ENCODE measurements at regions of chr6 and their contacts with region 1.

Region 1: DNA sequence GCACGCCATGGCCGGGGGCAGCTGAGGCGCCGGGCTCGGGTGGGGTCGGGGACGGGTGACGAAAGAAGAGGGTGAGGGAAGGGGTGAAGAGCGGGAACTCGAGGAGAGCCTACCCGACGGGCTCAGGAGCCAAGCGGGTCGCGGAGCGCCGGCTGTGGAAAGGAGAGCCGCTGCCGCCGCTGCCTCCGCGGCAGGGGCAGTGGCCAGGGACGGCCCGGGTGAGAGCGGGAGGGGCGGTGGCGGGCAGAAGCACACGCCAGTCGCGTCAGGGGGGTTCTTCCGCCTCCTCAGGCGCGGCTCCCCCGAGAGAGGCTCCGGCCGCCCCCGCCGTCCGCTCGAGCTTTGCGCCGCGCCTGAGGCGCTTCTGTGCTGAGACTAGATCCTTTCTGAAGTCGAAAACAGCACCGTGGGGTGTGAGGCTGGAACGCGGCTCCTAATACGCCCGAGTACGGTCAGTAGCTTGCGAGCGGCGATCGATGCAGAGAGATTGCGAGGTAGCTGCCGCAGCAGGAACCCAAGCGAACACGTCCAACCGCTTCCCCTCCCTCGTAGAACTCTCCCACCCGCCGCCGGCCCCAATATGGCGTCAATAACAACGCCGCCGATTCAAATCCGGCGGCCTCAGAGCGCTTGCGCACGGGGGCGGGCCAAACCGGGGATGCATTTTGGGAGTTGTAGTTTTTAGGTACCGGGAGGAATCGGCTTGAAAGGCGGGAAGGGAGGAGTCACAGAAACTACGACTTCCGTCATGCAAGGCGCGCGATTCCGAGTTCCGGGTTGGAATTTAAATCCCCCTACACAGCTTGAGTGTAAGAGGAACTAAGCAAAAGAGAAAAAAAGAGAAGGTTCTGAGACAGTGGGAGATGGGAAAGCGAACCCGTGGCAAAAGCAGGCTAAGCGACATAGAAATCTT is at the start of gene AKIRIN2:
- DNase-seq: peak; percentile 97
- H3K4me3 Mint-ChIP-seq: peak within 1 kb of the TSS; percentile 99
- H3K27ac Mint-ChIP-seq: peak within 1 kb of the TSS; percentile 97
- H3K4me1 Mint-ChIP-seq: peaks cover 44% of the 10 kb centered on the region
- H3K27me3 Mint-ChIP-seq: no peaks in the 10 kb centered on the region
- total RNA-seq, gene AKIRIN2: 40.1 and 42.0 TPM in 2 replicates

Region 2: DNA sequence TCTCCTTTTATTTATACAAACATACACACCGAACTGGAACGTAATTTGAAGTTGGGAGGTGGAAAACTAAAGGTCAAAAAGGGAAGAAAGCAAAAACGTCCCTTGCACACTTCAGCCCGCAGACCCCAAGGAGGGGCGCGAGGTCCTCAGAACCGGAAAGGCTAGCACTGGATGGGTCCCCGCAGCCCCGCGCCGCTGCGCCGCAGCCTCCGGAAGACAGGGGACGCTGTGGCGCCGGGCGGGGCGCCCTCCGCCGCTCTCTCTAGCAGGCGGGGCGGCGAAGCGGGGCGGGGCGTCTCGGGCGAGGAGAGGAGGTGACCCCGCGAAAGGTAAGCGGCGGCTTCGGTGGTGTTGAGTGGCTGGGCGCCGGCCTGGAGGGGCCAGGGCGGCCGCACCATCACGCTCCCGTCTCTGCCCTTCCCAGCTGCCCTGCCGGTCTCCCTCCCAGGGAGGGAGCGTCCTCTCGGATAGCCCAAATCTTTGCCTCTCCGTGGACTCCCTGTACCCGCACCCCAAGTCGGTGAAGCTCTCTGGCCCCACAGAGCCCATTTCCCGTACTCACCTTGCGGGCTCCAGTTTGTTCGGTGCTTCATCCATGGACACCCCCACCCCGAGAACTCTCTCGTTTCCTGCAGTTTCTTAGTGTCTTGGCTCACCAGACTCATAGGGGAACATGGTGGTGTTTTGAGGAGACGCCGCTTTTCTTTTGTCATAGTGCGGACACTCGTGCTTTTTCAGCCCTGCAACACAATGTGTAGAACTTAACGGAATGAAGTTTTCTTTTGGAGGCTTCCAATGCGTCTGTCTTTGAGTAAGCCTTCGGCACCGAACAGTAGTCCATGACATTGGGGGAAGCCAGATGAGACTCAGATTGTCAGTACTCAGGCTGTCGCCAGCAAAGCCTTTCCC is 379.4 kb before region 1 on chr6 and contains the start of gene SMIM8:
- intact Hi-C with region 1: loop called (anchors 1 kb)
- DNase-seq: peak; percentile 84
- H3K4me3 Mint-ChIP-seq: peak within 1 kb of the TSS; percentile 99
- H3K27ac Mint-ChIP-seq: peak within 1 kb of the TSS; percentile 92
- H3K4me1 Mint-ChIP-seq: peaks cover 8% of the 10 kb centered on the region
- H3K27me3 Mint-ChIP-seq: peaks cover 3% of the 10 kb centered on the region
- total RNA-seq, gene SMIM8: 7.3 and 9.2 TPM in 2 replicates

Region 3: GRCh38 chr6:87472525-87473418 is 229.2 kb before region 1 on chr6 and contains the start of gene SLC35A1:
- intact Hi-C with region 1: loop called (anchors 1 kb)
- DNase-seq: peak; percentile 77
- H3K4me3 Mint-ChIP-seq: peak within 1 kb of the TSS; percentile 98
- H3K27ac Mint-ChIP-seq: peak within 1 kb of the TSS; percentile 97
- H3K4me1 Mint-ChIP-seq: peaks cover 14% of the 10 kb centered on the region
- H3K27me3 Mint-ChIP-seq: peaks cover 7% of the 10 kb centered on the region
- total RNA-seq, gene SLC35A1: 9.7 and 10.2 TPM in 2 replicates

Region 4: DNA sequence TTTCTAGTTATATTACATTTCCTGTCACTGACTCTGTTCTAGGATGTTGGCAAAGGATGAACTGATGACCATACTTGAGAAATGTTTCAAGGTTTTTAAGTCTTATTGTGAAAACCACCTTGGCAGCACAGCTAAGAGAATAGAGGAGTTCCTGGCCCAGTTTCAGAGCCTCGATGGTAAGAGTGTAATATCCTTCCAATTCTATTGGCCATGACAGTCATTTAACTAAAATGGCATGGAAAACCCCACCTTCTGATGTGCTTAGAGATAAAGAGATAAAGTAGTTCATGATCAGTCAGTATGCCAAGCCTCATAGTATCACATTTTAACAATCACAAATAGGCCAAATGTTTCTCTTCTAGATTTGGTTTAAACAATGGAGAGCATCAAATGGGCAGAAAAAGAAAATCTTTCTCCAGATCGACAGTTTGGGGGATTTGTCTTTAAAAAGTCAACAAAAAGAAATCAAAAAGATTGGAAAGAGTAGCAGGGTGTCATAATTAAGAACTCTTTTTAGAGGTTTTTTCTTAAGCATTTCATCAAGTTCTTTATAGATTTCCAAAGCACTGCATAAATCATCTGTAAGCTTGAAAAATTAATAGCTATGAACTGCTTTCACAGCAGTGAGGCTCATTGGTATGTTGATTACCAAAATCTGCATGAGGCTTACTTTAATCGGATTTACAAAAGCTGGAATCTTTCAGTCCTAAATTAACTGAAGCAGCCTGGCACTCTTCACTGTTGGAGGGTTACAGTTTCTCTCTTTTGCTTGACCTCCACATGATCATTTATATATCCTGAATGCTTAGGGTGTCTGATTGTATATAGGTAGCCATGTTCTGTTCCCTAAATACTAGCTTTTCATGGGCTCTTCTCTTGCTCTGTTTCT is 48.6 kb before region 1 on chr6:
- intact Hi-C with region 1: loop called (anchors 2 kb)
- DNase-seq: no peak
- H3K4me3 Mint-ChIP-seq: peak overlapping the region; percentile 53
- H3K27ac Mint-ChIP-seq: peak overlapping the region; percentile 87
- H3K4me1 Mint-ChIP-seq: peaks cover 38% of the 10 kb centered on the region
- H3K27me3 Mint-ChIP-seq: no peaks in the 10 kb centered on the region

Region 5: GRCh38 chr6:87742106-87742505 is 40.2 kb after region 1 on chr6:
- intact Hi-C with region 1: loop called (anchors 1 kb)
- DNase-seq: peak; percentile 43
- H3K4me3 Mint-ChIP-seq: no peak overlapping the region
- H3K27ac Mint-ChIP-seq: peak overlapping the region; percentile 27
- H3K4me1 Mint-ChIP-seq: peaks cover 43% of the 10 kb centered on the region
- H3K27me3 Mint-ChIP-seq: peaks cover 2% of the 10 kb centered on the region

Region 6: DNA sequence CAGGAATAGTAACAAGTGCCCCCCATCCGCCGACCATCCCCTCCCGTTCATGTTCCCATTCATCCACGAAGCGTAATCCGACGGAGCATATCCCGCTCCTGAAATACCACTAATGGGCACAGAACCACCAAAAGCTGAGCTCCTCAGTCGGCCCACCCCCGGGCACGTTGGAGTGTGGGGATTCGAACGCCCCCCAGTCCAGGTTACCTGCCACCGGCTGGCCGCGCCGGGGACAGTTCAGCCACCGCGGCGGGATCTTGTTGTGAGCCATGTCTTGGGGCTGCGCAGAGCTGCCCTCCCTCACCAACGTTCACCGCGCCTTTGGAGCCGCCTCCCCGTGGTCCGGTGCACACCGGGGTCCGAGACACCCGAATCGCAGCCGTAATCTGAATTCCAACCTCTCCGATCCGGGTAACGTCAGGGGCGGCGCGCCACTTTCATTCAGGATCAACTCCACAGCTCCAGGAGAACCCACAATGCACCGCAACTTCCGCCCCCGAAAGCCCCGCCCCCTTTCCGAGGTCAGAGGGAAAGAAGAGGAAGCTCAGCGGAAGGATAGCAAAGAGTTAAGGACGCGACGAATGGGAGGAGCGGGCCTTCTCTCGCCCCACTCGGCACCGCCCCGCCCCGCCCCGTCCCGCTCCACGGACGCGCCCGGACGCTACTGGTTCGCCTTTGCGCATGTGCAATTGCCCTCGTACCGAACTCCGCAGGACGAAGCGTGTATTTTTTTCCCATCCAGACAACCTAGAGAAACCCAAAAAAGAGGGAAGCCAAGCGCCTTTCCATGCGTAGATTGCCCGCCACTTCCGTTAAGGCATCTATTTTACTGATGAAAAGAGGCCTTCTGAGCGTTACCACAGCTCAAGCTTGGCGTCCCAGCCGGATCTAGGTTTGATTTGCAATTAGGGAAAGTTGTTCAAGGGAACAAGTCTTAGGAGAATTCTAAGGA is 1261.5 kb after region 1 on chr6 and contains the start of gene RNGTT:
- intact Hi-C with region 1: loop called (anchors 2 kb)
- DNase-seq: peak; percentile 97
- H3K4me3 Mint-ChIP-seq: peak within 1 kb of the TSS; percentile 98
- H3K27ac Mint-ChIP-seq: peak within 1 kb of the TSS; percentile 84
- H3K4me1 Mint-ChIP-seq: peaks cover 33% of the 10 kb centered on the region
- H3K27me3 Mint-ChIP-seq: peaks cover 7% of the 10 kb centered on the region
- total RNA-seq, gene RNGTT: 21.6 and 25.3 TPM in 2 replicates